Posterior cingulate gyrus (tissue), 11 donors: ENCODE measurements at regions of chr11 and their contacts with region 1.

Region 1: GRCh38 chr11:121722431-121723245 is 269.9 kb upstream of the SORL1-AS1 start:
- DNase-seq: peak; percentile 88 to 98 (median 93)

Region 2: GRCh38 chr11:121482231-121483129 is 240.2 kb before region 1 on chr11:
- intact Hi-C with region 1: no loop called
- DNase-seq: no peak

Region 3: GRCh38 chr11:121696177-121696871 is 26.3 kb before region 1 on chr11:
- intact Hi-C with region 1: loop called (anchors 2 kb)
- DNase-seq: peak; percentile 23 to 90 (median 57)

Region 4: GRCh38 chr11:121839781-121840180 is 117.1 kb after region 1 on chr11:
- intact Hi-C with region 1: no loop called
- DNase-seq: no peak

Region 5: GRCh38 chr11:121929581-121929980 is 206.9 kb after region 1 on chr11:
- intact Hi-C with region 1: loop called (anchors 1 kb)
- DNase-seq: peak in 8 of 10 donors; percentile 21 to 90 (median 34)

Region 6: DNA sequence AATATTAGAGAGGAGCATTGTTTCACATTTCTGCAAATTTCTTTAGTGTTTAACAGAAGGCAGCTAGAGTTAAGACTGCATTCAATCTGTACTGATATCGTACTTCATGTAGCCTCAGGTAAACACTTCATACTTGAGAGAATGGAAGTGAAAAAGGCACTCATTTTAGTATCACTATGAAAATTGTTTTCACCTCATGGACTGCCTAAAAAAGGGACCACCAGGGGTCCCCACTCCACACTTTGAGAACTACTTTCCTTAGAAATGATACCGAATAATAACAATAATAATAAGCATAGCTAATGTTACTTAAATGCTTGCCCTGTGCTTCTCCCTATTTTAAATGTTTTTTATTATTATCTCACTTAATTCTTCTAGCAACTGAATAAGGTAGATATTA is 298.3 kb after region 1 on chr11:
- intact Hi-C with region 1: loop called (anchors 10 kb)
- DNase-seq: peak in 1 of 10 donors; percentile 18

Region 7: GRCh38 chr11:122101625-122102291 is 379.1 kb after region 1 on chr11:
- intact Hi-C with region 1: loop called (anchors 2 kb)
- DNase-seq: peak; percentile 64 to 96 (median 78)